ENCODE measurements at regions of chr5 and their contacts with region 1.

Region 1: GRCh38 chr5:44862808-44863207 is 54.1 kb downstream of the MRPS30 start:
- DNase-seq: no peak
- H3K4me3 Mint-ChIP-seq: no peak overlapping the region
- H3K27ac Mint-ChIP-seq: no peak overlapping the region
- H3K4me1 Mint-ChIP-seq: peaks cover 20% of the 10 kb centered on the region
- H3K27me3 Mint-ChIP-seq: no peaks in the 10 kb centered on the region
- CTCF ChIP-seq: peak; percentile 16

Region 2: DNA sequence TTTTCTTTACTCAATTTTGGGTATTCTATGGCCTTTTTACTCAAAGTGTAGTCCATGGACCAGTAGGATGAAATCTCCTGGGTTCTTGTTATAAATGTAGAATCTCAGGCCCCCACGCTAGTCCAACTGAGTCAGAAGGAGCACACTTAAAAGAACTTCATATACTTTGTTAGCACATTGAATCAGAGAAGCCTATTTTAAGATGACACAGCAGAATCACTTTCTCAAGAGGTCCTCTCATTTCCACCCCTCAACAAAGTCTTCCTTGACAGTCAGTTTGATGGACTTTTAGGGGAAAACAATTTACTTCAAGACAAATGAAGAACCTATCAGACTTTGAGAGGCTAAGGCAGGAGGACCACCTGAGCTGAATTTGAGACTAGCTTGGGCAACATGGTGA is 435.9 kb before region 1 on chr5:
- CTCF ChIA-PET with region 1: no interaction called
- intact Hi-C with region 1: no loop called
- DNase-seq: no peak
- H3K4me3 Mint-ChIP-seq: no peak overlapping the region
- H3K27ac Mint-ChIP-seq: no peak overlapping the region
- H3K4me1 Mint-ChIP-seq: no peaks in the 10 kb centered on the region
- H3K27me3 Mint-ChIP-seq: no peaks in the 10 kb centered on the region
- CTCF ChIP-seq: no peak

Region 3: DNA sequence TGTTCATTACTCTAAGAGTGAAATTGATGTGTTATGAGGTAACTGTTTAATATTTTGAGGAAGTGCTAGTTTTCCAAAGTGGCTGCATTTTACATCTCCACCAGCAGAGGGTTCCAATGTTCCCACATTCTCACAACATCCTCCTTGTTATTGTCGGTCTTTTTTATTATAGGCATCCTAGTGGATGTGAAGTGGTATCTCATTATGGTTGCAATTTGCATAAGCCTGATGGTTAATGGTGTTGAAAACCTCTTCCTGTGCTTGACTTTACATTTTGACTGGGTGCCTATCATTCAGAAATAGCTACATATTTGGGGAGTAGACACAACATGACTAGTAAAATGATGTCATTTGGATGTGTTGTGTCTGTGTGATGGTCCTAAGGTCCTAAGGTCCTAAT is 89.6 kb after region 1 on chr5:
- CTCF ChIA-PET with region 1: no interaction called
- intact Hi-C with region 1: loop called (anchors 2 kb)
- DNase-seq: peak; percentile 37
- H3K4me3 Mint-ChIP-seq: no peak overlapping the region
- H3K27ac Mint-ChIP-seq: no peak overlapping the region
- H3K4me1 Mint-ChIP-seq: no peaks in the 10 kb centered on the region
- H3K27me3 Mint-ChIP-seq: no peaks in the 10 kb centered on the region
- CTCF ChIP-seq: peak; percentile 79

Region 4: DNA sequence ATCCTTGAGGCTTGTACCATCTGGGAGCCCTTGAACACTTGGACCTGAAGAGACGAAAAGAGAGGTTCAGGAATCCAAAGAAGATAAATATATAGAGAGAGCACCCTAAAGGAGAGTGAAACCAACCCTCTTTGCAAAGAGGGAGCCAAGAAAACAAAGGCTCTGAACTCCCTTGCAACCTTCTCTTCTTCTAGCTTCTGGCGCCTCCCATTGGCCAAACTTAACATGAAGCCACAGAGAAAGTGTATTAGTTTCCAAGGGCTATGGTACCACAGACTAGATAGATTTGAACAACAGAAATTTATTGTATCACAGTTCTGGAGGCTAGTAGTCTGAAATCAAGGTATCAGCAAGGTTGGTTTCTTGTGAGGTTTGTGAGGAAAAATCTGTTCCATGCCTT is 658.3 kb after region 1 on chr5:
- CTCF ChIA-PET with region 1: interaction called, 5 read pairs
- intact Hi-C with region 1: loop called (anchors 10 kb)
- DNase-seq: peak; percentile 27
- H3K4me3 Mint-ChIP-seq: no peak overlapping the region
- H3K27ac Mint-ChIP-seq: no peak overlapping the region
- H3K4me1 Mint-ChIP-seq: no peaks in the 10 kb centered on the region
- H3K27me3 Mint-ChIP-seq: no peaks in the 10 kb centered on the region
- CTCF ChIP-seq: peak; percentile 31